ENCODE measurements at regions of chrX and their contacts with region 1.

Region 1: DNA sequence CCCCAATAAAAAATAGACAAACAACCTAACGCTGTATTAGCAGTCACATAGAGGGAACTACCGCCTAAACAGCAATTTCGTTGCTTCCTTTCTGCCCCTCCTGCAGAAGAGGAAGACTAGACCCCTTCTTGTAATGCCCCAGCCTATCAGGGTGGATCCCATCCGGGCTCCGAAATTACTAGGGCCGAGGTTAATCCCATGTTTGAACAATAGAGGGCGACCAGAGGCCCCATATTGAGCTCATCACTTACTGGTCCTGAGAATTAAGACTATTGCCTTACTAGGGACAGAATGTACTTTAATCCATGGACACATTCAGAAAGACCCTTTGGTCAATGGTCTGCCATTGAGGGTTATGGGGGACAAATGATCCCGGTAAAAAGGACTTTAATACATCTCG is 11.8 kb upstream of the ZNF630 start:
- DNase-seq: peak; percentile 26
- ATAC-seq: peak; percentile 93
- H3K4me3 ChIP-seq: no peak overlapping the region
- H3K27ac ChIP-seq: no peak overlapping the region
- H3K4me1 ChIP-seq: no peaks in the 10 kb centered on the region
- H3K27me3 ChIP-seq: no peaks in the 10 kb centered on the region
- CTCF ChIP-seq: peak; percentile 48 to 53 (median 51); a peak in 5 of 6 replicates
- POLR2A ChIP-seq: no peak
- RAD21 ChIP-seq: peak; percentile 73

Region 2: GRCh38 chrX:48468693-48469691 is 385.8 kb after region 1 on chrX:
- CTCF ChIA-PET with region 1: interaction called, 11 read pairs
- POLR2A ChIA-PET with region 1: no interaction called
- RAD21 ChIA-PET with region 1: no interaction called
- intact Hi-C with region 1: no loop called
- DNase-seq: no peak
- ATAC-seq: peak; percentile 57
- H3K4me3 ChIP-seq: peak overlapping the region; percentile 61 to 62
- H3K27ac ChIP-seq: peak overlapping the region; percentile 70
- H3K4me1 ChIP-seq: peaks cover 3 to 24% of the 10 kb centered on the region in 2 experiments; a peak in 3 of 4 replicates
- H3K27me3 ChIP-seq: no peaks in the 10 kb centered on the region
- CTCF ChIP-seq: peak in 2 of 3 experiments; percentile 35 to 42; a peak in 3 of 6 replicates
- POLR2A ChIP-seq: no peak
- RAD21 ChIP-seq: no peak

Region 3: DNA sequence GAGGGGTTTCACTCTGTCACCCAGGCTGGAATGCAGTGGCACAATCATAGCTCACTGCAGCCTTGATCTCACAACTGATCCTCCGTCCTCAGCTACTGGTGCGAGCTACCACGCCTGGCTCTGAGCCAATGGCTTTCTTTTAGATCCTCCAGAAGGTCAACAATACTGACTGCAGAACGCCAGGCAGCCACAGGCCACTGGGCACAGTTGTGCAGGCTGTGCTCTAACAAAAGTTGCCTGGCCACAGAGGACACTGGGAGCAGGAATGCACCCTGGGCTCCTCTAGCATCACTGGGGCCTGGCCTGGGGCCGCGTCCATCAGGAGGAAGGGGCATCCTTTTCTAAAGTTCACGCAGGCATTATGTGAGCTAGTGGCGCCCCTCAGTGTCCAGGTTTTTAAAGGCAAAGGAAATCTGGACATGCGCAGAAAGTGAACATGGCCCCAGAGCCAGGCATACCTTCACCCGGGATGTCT is 410.7 kb after region 1 on chrX:
- CTCF ChIA-PET with region 1: interaction called, 8 read pairs
- POLR2A ChIA-PET with region 1: no interaction called
- RAD21 ChIA-PET with region 1: interaction called in 1 of 2 experiments, 8 read pairs
- intact Hi-C with region 1: loop called (anchors 5 kb)
- DNase-seq: peak; percentile 38
- ATAC-seq: peak; percentile 48
- H3K4me3 ChIP-seq: no peak overlapping the region
- H3K27ac ChIP-seq: no peak overlapping the region
- H3K4me1 ChIP-seq: peaks cover 10 to 60% of the 10 kb centered on the region in 2 experiments
- H3K27me3 ChIP-seq: no peaks in the 10 kb centered on the region
- CTCF ChIP-seq: peak in 1 of 3 experiments; percentile 49; a peak in 2 of 6 replicates
- POLR2A ChIP-seq: no peak
- RAD21 ChIP-seq: no peak